Natural killer cell (primary cell): ENCODE measurements at regions of chr15 and their contacts with region 1.

Region 1: DNA sequence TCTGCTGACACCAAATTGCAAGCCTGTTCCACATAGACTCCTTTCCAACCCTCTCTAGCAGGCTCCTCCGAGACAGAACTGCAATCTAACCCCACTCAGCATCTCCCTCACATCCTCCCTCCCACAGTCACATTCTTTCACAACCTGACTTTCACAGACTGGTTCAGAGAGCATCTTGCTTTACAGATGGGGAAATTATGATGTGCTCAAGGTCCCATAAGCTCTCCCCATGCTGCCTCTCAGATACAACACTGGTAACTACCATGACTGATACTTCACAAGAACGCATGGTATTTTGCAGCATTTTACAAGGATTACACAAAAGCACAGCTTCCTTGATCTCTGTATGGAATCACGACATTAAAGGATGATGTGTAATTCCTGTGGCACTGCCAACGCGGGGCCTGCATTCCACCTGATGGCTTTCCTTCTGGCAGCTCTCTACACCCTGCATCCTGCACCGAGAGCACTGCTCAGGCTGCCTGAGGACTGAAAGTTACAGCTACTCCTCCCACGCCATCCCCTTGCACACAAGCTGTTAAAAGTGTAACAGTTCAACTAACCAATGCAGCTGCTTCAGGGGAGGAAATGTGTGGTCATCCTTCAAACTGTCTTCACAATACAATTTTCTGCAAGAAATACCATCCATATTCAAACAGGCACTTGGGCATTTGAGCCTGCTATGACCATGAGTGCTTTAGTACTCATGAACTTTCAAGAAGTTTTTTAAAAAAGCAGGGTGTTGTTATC is 27.6 kb downstream of the TBC1D2B start:
- DNase-seq: peak; percentile 51 to 74
- ATAC-seq: peak; percentile 50 to 77 (median 67)
- H3K4me3 ChIP-seq: no peak overlapping the region
- H3K4me3 Mint-ChIP-seq: peak overlapping the region; percentile 86
- H3K27ac ChIP-seq: peak overlapping the region; percentile 63
- H3K27ac Mint-ChIP-seq: peak overlapping the region; percentile 96 to 98
- H3K4me1 ChIP-seq: peaks cover 69% of the 10 kb centered on the region
- H3K4me1 Mint-ChIP-seq: peaks cover 78 to 79% of the 10 kb centered on the region in 2 donors
- H3K27me3 ChIP-seq: no peaks in the 10 kb centered on the region
- H3K27me3 Mint-ChIP-seq: no peaks in the 10 kb centered on the region
- CTCF ChIP-seq: no peak

Region 2: GRCh38 chr15:78065284-78065872 is 15.5 kb after region 1 on chr15:
- intact Hi-C with region 1: loop called (anchors 1 kb)
- DNase-seq: peak in 1 of 2 donors; percentile 55
- ATAC-seq: peak in 2 of 3 donors; percentile 11 to 41
- H3K4me3 ChIP-seq: no peak overlapping the region
- H3K4me3 Mint-ChIP-seq: no peak overlapping the region
- H3K27ac ChIP-seq: peak overlapping the region; percentile 54
- H3K27ac Mint-ChIP-seq: no peak overlapping the region
- H3K4me1 ChIP-seq: peaks cover 60% of the 10 kb centered on the region
- H3K4me1 Mint-ChIP-seq: peaks cover 14 to 15% of the 10 kb centered on the region in 2 donors
- H3K27me3 ChIP-seq: no peaks in the 10 kb centered on the region
- H3K27me3 Mint-ChIP-seq: no peaks in the 10 kb centered on the region
- CTCF ChIP-seq: no peak

Region 3: GRCh38 chr15:78077058-78077877 is 27.4 kb after region 1 on chr15 and contains the start of gene TBC1D2B:
- intact Hi-C with region 1: no loop called
- DNase-seq: peak; percentile 59 to 87
- ATAC-seq: peak; percentile 86 to 91 (median 88)
- H3K4me3 ChIP-seq: peak within 1 kb of the TSS; percentile 86
- H3K4me3 Mint-ChIP-seq: peak within 1 kb of the TSS; percentile 98
- H3K27ac ChIP-seq: peak within 1 kb of the TSS; percentile 73
- H3K27ac Mint-ChIP-seq: peak within 1 kb of the TSS; percentile 80 to 92
- H3K4me1 ChIP-seq: peaks cover 30% of the 10 kb centered on the region
- H3K4me1 Mint-ChIP-seq: peaks cover 36 to 41% of the 10 kb centered on the region in 2 donors
- H3K27me3 ChIP-seq: no peaks in the 10 kb centered on the region
- H3K27me3 Mint-ChIP-seq: no peaks in the 10 kb centered on the region
- CTCF ChIP-seq: no peak
- total RNA-seq, gene TBC1D2B: 54.0 to 83.5 (median 56.7) TPM